ENCODE measurements at regions of chr1 and their contacts with region 1.

Region 1: DNA sequence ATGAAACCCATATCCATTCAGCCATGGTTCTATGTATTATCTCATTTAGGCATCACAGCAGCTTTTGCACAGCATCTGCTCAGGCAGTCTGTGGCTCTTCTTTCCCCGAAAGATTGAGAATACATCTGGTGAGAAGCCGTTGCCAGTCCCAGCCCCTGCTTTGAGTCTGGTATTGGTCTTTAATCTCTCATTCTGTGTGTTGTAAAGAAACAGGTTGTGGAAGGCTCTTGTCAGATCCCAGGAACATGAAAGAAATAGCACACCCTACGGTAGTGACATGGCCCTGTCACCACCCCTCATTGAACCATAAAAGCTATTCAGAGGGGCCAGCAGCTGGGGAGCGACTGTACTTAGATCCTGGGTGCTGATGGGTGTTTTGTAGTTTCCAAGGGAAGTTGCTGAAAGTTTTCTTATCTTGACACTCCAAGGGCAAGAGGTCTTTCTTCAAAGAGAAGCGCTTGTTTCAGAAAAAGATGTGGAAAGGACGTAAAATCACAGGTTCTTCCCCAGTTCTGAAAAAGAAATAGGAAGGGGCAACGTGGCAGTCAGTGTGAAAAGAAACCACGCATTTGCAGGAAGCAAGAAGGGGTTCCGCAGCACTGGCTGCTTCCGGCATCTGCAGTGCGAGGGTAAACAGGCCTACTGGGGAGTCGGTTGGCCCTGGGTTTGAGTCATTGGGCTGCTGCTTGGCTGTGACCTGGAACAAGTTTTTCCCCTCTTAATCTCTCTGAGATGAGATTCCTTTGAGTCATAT is 145.0 kb downstream of the DHRS3 start:
- DNase-seq: peak; percentile 14 to 78 (median 68)
- ATAC-seq: peak; percentile 73
- H3K4me3 ChIP-seq: peak overlapping the region; percentile 6 to 25
- H3K4me3 Mint-ChIP-seq: peak overlapping the region; percentile 78
- H3K27ac ChIP-seq: peak overlapping the region; percentile 49 to 88
- H3K27ac Mint-ChIP-seq: peak overlapping the region; percentile 97
- H3K4me1 ChIP-seq: peaks cover 84% of the 10 kb centered on the region
- H3K4me1 Mint-ChIP-seq: peaks cover 90% of the 10 kb centered on the region
- H3K27me3 ChIP-seq: no peaks in the 10 kb centered on the region
- H3K27me3 Mint-ChIP-seq: no peaks in the 10 kb centered on the region
- CTCF ChIP-seq: no peak

Region 2: DNA sequence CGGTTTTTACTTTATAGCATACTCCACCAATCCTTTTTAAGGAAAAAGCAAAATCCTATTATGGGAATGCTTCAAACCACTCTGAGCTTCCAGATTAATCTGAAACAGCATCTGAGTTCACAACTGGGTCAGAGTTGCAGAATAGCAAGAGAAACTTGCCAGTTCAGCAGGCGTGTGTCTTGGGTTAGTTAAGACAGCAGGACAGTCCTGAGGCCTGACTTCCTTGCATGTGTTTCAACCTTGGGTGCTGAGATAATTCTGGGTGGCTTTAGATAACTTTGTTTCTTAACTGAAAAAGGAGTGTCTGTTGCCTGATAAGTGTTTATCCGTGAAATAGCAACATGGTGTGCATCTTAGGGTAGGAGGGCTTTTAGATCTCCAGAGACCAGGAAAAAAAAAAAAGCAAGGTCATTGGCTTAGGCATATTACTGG is 24.2 kb before region 1 on chr1:
- CTCF ChIA-PET with region 1: interaction called, 12 read pairs
- POLR2A ChIA-PET with region 1: interaction called, 5 read pairs
- intact Hi-C with region 1: loop called (anchors 1 to 2 kb)
- DNase-seq: no peak
- ATAC-seq: no peak
- H3K4me3 ChIP-seq: peak overlapping the region in 1 of 2 experiments; percentile 0
- H3K4me3 Mint-ChIP-seq: peak overlapping the region; percentile 73
- H3K27ac ChIP-seq: peak overlapping the region; percentile 26 to 56
- H3K27ac Mint-ChIP-seq: peak overlapping the region; percentile 96
- H3K4me1 ChIP-seq: peaks cover 71% of the 10 kb centered on the region
- H3K4me1 Mint-ChIP-seq: peaks cover 76% of the 10 kb centered on the region
- H3K27me3 ChIP-seq: no peaks in the 10 kb centered on the region
- H3K27me3 Mint-ChIP-seq: no peaks in the 10 kb centered on the region
- CTCF ChIP-seq: no peak

Region 3: GRCh38 chr1:12454406-12455391 is 18.3 kb before region 1 on chr1:
- CTCF ChIA-PET with region 1: interaction called, 12 read pairs
- POLR2A ChIA-PET with region 1: interaction called, 5 read pairs
- intact Hi-C with region 1: loop called (anchors 1 to 2 kb)
- DNase-seq: no peak
- ATAC-seq: no peak
- H3K4me3 ChIP-seq: no peak overlapping the region
- H3K4me3 Mint-ChIP-seq: peak overlapping the region; percentile 19
- H3K27ac ChIP-seq: no peak overlapping the region
- H3K27ac Mint-ChIP-seq: peak overlapping the region; percentile 90
- H3K4me1 ChIP-seq: peaks cover 88% of the 10 kb centered on the region
- H3K4me1 Mint-ChIP-seq: peaks cover 86% of the 10 kb centered on the region
- H3K27me3 ChIP-seq: no peaks in the 10 kb centered on the region
- H3K27me3 Mint-ChIP-seq: no peaks in the 10 kb centered on the region
- CTCF ChIP-seq: no peak

Region 4: GRCh38 chr1:12511516-12512468 is 38.8 kb after region 1 on chr1:
- CTCF ChIA-PET with region 1: no interaction called
- POLR2A ChIA-PET with region 1: interaction called, 11 read pairs
- intact Hi-C with region 1: loop called in 1 of 2 experiments (anchors 2 kb)
- DNase-seq: no peak
- ATAC-seq: no peak
- H3K4me3 ChIP-seq: peak overlapping the region in 1 of 2 experiments; percentile 20
- H3K4me3 Mint-ChIP-seq: peak overlapping the region; percentile 75
- H3K27ac ChIP-seq: peak overlapping the region; percentile 64 to 77
- H3K27ac Mint-ChIP-seq: peak overlapping the region; percentile 98
- H3K4me1 ChIP-seq: peaks cover 34% of the 10 kb centered on the region
- H3K4me1 Mint-ChIP-seq: peaks cover 52% of the 10 kb centered on the region
- H3K27me3 ChIP-seq: no peaks in the 10 kb centered on the region
- H3K27me3 Mint-ChIP-seq: no peaks in the 10 kb centered on the region
- CTCF ChIP-seq: no peak

Region 5: DNA sequence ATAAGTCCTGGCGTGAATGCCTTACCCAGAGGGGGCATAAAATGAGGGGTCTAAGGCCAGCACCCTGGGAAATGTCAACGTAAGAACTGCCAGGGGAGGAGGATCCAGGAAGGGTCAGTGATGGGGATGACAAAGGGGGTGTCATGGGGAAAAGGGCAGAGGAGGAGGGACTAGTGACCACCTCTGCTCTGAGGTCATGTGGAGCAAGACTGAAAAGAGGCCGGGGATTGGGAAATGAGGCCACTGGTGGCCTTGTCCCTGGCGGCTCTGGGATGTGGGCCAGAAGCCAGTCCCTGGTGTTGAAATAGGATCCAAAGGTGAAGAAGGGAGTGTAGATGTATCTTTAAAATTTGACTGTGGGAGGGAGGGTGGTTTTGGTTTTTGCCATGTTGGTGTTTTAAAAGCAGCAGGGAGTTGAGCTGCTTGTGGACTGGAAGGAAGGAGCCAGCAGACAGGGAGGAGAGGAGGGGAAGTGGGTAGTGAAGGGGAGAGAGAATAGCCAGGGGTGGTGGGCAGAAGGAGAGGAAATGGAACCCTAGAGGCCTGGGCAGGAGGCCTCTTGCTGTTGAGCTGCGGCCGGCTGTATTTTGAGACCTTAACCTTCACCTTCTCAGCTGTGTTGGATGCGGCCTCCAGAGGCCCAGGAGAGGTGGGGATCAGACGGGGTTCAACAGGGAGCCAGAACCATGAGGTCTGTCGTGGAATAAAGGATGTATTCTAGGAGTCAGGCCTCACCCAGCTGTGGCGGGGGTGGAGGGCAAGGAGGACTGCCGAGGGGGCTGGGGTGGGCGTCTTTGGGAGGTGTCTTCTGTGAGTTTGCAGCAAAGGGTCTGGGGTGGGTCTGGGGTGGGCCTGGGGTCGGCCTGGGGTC is 52.6 kb after region 1 on chr1:
- CTCF ChIA-PET with region 1: no interaction called
- POLR2A ChIA-PET with region 1: interaction called, 3 read pairs
- intact Hi-C with region 1: loop called in 1 of 2 experiments (anchors 2 kb)
- DNase-seq: no peak
- ATAC-seq: no peak
- H3K4me3 ChIP-seq: no peak overlapping the region
- H3K4me3 Mint-ChIP-seq: no peak overlapping the region
- H3K27ac ChIP-seq: no peak overlapping the region
- H3K27ac Mint-ChIP-seq: no peak overlapping the region
- H3K4me1 ChIP-seq: no peaks in the 10 kb centered on the region
- H3K4me1 Mint-ChIP-seq: peaks cover 6% of the 10 kb centered on the region
- H3K27me3 ChIP-seq: no peaks in the 10 kb centered on the region
- H3K27me3 Mint-ChIP-seq: no peaks in the 10 kb centered on the region
- CTCF ChIP-seq: no peak

Measured in CD8-positive, alpha-beta T cell (primary cell).